ENCODE measurements at regions of chr16 and their contacts with region 1.

Region 1: GRCh38 chr16:66562407-66562806 is 3.8 kb upstream of the CMTM1 start:
- DNase-seq: no peak
- H3K4me3 Mint-ChIP-seq: no peak overlapping the region
- H3K27ac Mint-ChIP-seq: no peak overlapping the region
- H3K4me1 Mint-ChIP-seq: peaks cover 55% of the 10 kb centered on the region
- H3K27me3 Mint-ChIP-seq: no peaks in the 10 kb centered on the region

Region 2: GRCh38 chr16:66516808-66517585 is 45.4 kb before region 1 on chr16:
- CTCF ChIA-PET with region 1: interaction called, 5 read pairs
- intact Hi-C with region 1: loop called (anchors 1 kb)
- DNase-seq: peak; percentile 96
- H3K4me3 Mint-ChIP-seq: peak overlapping the region; percentile 68
- H3K27ac Mint-ChIP-seq: peak overlapping the region; percentile 93
- H3K4me1 Mint-ChIP-seq: peaks cover 60% of the 10 kb centered on the region
- H3K27me3 Mint-ChIP-seq: no peaks in the 10 kb centered on the region

Region 3: GRCh38 chr16:66521951-66522771 is 40.2 kb before region 1 on chr16:
- CTCF ChIA-PET with region 1: interaction called, 5 read pairs
- intact Hi-C with region 1: loop called (anchors 1 kb)
- DNase-seq: peak; percentile 98
- H3K4me3 Mint-ChIP-seq: peak overlapping the region; percentile 50
- H3K27ac Mint-ChIP-seq: peak overlapping the region; percentile 89
- H3K4me1 Mint-ChIP-seq: peaks cover 72% of the 10 kb centered on the region
- H3K27me3 Mint-ChIP-seq: no peaks in the 10 kb centered on the region

Region 4: GRCh38 chr16:66575060-66575459 is 12.7 kb after region 1 on chr16:
- CTCF ChIA-PET with region 1: interaction called, 11 read pairs
- intact Hi-C with region 1: no loop called
- DNase-seq: no peak
- H3K4me3 Mint-ChIP-seq: no peak overlapping the region
- H3K27ac Mint-ChIP-seq: no peak overlapping the region
- H3K4me1 Mint-ChIP-seq: peaks cover 9% of the 10 kb centered on the region
- H3K27me3 Mint-ChIP-seq: peaks cover 24% of the 10 kb centered on the region

Measured in activated naive CD4-positive, alpha-beta T cell treated with anti-CD3 and anti-CD28 coated beads for 36 hours (primary cell).